ENCODE measurements at regions of chr1 and their contacts with region 1.

Region 1: GRCh38 chr1:211133836-211134669 is at the start of gene KCNH1:
- DNase-seq: peak; percentile 59
- H3K4me3 ChIP-seq: peak within 1 kb of the TSS; percentile 34 to 41 (median 37)
- H3K27ac ChIP-seq: no peak within 1 kb of the TSS
- H3K4me1 ChIP-seq: peaks cover 9% of the 10 kb centered on the region
- H3K27me3 ChIP-seq: peaks cover 16% of the 10 kb centered on the region
- CTCF ChIP-seq: peak; percentile 53 to 70
- total RNA-seq, gene KCNH1: not detected

Region 2: DNA sequence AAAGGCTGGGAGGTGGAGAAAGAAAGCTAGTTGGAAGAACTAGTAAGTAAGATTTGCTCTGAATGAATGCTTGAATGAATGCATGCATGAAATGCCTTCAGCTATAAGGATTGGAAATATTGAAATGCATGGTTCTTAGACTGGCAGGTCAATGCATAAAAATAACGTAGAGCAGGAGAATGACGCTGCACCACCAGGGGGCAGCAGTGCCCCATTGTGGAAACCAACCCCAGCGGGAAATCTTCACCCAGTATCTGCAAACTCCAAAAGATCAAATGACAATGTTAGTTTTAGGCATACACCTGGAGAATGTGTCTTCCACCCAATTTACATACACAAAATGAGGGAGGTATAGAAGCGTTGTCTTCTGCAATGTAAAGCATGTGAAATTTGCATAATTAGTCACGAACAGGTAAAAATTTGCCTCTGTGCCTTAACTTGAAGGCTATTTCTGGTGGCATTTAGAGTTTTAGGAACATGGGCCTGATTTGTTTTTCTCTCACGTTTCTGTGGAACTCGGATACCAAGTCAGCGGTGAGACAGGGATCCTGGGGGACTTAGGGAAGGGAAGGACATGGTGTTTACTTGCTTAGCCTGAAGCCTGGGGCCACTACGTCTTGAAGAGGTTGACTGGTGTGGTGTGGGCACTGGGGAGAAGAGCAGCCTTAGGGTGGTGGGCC is 726.7 kb before region 1 on chr1:
- CTCF ChIA-PET with region 1: no interaction called
- dilution Hi-C with region 1: no loop called
- in situ Hi-C with region 1: loop called in 1 of 2 experiments (anchors 10 kb)
- intact Hi-C with region 1: loop called (anchors 1 kb)
- DNase-seq: peak; percentile 50
- H3K4me3 ChIP-seq: no peak overlapping the region
- H3K27ac ChIP-seq: no peak overlapping the region
- H3K4me1 ChIP-seq: peaks cover 21% of the 10 kb centered on the region
- H3K27me3 ChIP-seq: no peaks in the 10 kb centered on the region
- CTCF ChIP-seq: peak; percentile 96 to 99

Region 3: GRCh38 chr1:210448297-210448892 is 685.7 kb before region 1 on chr1:
- CTCF ChIA-PET with region 1: interaction called, 8 read pairs
- dilution Hi-C with region 1: no loop called
- in situ Hi-C with region 1: loop called in 1 of 2 experiments (anchors 25 kb)
- intact Hi-C with region 1: loop called (anchors 1 kb)
- DNase-seq: peak; percentile 18
- H3K4me3 ChIP-seq: no peak overlapping the region
- H3K27ac ChIP-seq: no peak overlapping the region
- H3K4me1 ChIP-seq: no peaks in the 10 kb centered on the region
- H3K27me3 ChIP-seq: no peaks in the 10 kb centered on the region
- CTCF ChIP-seq: peak; percentile 63 to 68

Region 4: DNA sequence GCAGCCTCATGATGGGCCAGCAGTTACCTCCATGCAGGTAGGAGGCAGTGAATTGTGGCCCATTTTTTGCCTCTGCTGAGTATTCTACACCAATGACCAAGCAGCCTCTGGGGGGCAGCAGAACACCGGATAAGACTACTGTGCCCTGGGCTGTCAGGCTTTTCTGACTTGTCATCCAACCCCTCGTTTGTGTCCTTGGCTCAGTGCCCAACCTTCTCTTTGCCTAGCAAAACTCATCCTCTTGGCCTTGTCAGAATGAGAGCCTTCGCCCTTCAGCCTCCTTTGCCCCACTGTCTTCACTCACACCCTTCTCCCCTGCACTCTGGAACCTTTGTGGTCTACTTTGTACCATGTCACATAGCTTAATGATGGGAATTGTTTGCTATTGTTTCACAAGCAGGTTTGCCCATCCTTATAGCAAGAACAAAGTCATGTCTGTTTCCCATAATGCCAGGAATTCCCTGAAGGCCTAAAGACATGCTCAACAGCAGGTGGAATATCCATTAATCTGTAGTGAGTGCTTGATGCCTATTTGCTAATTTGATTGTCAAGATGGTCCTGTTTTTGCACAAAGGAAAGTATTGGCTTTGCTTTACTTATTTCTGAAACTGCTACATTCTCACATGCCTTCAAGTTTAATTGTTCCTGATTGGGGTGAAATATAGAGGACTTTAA is 549.5 kb before region 1 on chr1:
- CTCF ChIA-PET with region 1: no interaction called
- dilution Hi-C with region 1: no loop called
- in situ Hi-C with region 1: loop called (anchors 5 to 10 kb)
- intact Hi-C with region 1: loop called (anchors 1 kb)
- DNase-seq: peak; percentile 62
- H3K4me3 ChIP-seq: no peak overlapping the region
- H3K27ac ChIP-seq: no peak overlapping the region
- H3K4me1 ChIP-seq: no peaks in the 10 kb centered on the region
- H3K27me3 ChIP-seq: no peaks in the 10 kb centered on the region
- CTCF ChIP-seq: peak; percentile 75 to 78

Region 5: GRCh38 chr1:211258756-211259637 is 124.9 kb after region 1 on chr1 and contains the start of gene RCOR3:
- CTCF ChIA-PET with region 1: interaction called, 6 read pairs
- dilution Hi-C with region 1: no loop called
- in situ Hi-C with region 1: no loop called
- intact Hi-C with region 1: loop called (anchors 1 kb)
- DNase-seq: peak; percentile 90
- H3K4me3 ChIP-seq: peak within 1 kb of the TSS; percentile 97 to 99 (median 97)
- H3K27ac ChIP-seq: peak within 1 kb of the TSS; percentile 87
- H3K4me1 ChIP-seq: peaks cover 18% of the 10 kb centered on the region
- H3K27me3 ChIP-seq: no peaks in the 10 kb centered on the region
- CTCF ChIP-seq: peak; percentile 31 to 65
- total RNA-seq, gene RCOR3: 32.8 to 34.5 TPM

Measured in mammary epithelial cell (primary cell).